HCT116 (cell line): ENCODE measurements at regions of chr6 and their contacts with region 1.

Region 1: DNA sequence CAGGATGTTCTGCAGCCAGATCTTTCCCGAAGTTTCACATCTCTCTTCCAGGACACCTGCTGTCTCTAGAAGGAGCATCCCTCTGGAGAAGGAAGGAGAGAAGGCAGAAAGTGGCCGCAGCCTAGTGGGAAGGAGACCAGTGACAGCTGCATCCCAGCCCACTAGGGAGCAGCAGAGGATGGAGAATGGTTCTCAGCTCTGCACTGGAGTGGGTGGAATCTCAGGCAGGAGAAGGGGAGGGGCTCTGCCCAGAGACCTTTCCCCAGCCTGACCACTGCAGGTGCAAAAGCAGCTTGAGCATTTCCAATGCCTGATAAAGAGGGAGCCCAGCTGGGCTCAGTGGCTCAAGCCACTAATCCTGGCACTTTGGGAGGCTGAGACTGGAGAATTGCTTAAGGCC is 32.3 kb downstream of the NCR2 start:
- DNase-seq: peak; percentile 60
- ATAC-seq: peak; percentile 92
- H3K4me3 ChIP-seq: no peak overlapping the region
- H3K27ac ChIP-seq: no peak overlapping the region
- H3K4me1 ChIP-seq: peaks cover 2 to 3% of the 10 kb centered on the region in 2 experiments; a peak in 1 of 4 replicates
- H3K27me3 ChIP-seq: peaks cover 4% of the 10 kb centered on the region; the same call in 1 of the 2 replicates
- CTCF ChIP-seq: peak; percentile 80 to 91 (median 86)
- POLR2A ChIP-seq: no peak
- RAD21 ChIP-seq: peak; percentile 93

Region 2: DNA sequence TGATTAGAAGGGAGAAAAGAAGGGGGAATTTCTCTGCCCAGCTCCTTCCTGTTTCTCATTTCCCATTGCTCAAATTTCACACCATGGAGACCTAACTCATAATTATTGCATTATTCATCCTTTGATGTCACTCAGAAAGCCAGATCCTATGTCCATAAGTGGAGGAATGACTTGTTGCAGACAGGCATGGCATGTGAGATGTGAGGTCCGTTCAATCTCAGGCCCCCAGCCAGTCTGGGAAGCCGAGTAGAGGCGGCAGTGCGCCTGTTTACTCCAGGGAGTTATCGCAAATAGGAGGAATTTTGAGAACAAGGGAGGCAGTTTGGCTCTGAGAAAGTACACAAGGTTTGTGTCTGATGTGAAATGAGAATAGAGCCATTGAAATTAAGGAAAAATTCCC is 1406.5 kb before region 1 on chr6:
- CTCF ChIA-PET with region 1: no interaction called
- POLR2A ChIA-PET with region 1: no interaction called
- RAD21 ChIA-PET with region 1: no interaction called
- intact Hi-C with region 1: no loop called
- DNase-seq: no peak
- ATAC-seq: no peak
- H3K4me3 ChIP-seq: no peak overlapping the region
- H3K27ac ChIP-seq: no peak overlapping the region
- H3K4me1 ChIP-seq: no peaks in the 10 kb centered on the region
- H3K27me3 ChIP-seq: peaks cover 41% of the 10 kb centered on the region
- CTCF ChIP-seq: no peak
- POLR2A ChIP-seq: no peak
- RAD21 ChIP-seq: no peak

Region 3: DNA sequence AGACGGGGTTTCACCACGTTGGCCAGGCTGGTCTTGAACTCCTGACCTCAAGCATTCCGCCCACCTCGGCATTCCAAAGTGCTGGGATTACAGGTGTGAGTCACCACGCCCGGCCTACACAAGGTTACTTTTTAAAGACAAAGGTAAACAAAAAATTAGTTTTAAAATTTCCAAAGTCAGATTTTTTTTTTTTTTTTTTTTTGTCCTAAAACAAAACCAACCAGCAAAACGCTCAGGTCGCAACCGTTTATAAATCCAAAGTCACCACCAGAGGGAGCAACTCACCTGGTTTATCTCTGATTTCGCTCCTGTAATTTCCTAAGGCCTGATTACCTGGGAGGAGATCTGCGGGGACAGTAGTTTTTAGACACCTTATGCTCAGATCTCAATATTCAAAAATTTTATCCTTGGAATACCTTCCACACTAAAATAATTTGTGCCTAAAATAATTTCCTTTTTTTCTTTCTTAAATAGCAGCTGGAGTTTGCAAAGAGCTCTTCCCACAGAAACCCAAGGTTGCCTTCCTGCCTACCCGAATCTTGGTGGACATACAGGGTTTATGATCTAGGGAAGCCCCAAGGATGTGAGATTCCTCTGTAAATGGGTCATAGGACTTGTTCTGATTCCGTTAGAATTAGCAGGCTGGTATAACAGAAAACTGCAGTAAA is 61.4 kb before region 1 on chr6:
- CTCF ChIA-PET with region 1: interaction called, 8 read pairs
- POLR2A ChIA-PET with region 1: no interaction called
- RAD21 ChIA-PET with region 1: no interaction called
- intact Hi-C with region 1: loop called (anchors 5 kb)
- DNase-seq: peak; percentile 58
- ATAC-seq: peak; percentile 84
- H3K4me3 ChIP-seq: peak overlapping the region; percentile 19 to 40; a peak in 3 of 4 replicates
- H3K27ac ChIP-seq: no peak overlapping the region
- H3K4me1 ChIP-seq: 0 out of 4 replicates have a peak, but pooled peaks cover 0 to 8% of the 10 kb centered on the region in 2 experiments
- H3K27me3 ChIP-seq: peaks cover 2% of the 10 kb centered on the region; the same call in 1 of the 2 replicates
- CTCF ChIP-seq: peak; percentile 59 to 73 (median 64); a peak in 5 of 6 replicates
- POLR2A ChIP-seq: no peak
- RAD21 ChIP-seq: peak; percentile 60

Region 4: DNA sequence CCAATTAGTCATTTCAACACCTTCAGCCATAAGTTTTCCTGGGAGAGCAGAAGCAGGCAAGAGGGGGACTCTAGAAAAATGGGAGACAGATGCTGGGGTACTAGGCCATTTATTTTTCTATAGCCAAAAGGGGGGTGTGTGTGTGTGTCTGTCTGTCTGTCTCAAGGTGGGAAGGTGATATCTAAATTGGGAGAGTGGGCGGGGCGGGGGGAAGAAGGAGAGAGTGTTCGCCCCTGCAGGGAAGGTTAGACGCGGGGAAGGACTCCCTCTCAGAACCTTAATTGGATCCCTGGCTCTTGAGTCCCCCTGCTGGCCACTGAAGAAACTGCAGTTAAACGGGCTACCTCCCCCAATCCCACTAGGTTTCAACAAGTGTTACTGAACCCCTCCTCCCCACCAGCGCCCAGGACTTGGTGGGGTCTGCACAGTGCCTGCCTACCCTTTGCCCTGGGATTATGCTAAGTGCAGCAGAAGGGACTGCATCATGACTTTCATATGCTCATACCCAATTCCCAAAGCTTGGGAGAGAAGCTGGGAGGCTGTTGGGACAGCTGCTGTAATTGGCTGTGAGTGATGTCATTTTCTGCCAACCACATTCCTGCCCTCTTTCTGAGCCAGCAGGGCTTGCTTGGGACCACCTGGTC is 224.3 kb after region 1 on chr6:
- CTCF ChIA-PET with region 1: interaction called, 6 read pairs
- POLR2A ChIA-PET with region 1: no interaction called
- RAD21 ChIA-PET with region 1: no interaction called
- intact Hi-C with region 1: loop called (anchors 1 kb)
- DNase-seq: peak; percentile 46
- ATAC-seq: peak; percentile 88
- H3K4me3 ChIP-seq: no peak overlapping the region
- H3K27ac ChIP-seq: no peak overlapping the region
- H3K4me1 ChIP-seq: peaks cover 0 to 3% of the 10 kb centered on the region in 2 experiments; a peak in 1 of 4 replicates
- H3K27me3 ChIP-seq: no peaks in the 10 kb centered on the region
- CTCF ChIP-seq: peak; percentile 89 to 92 (median 90)
- POLR2A ChIP-seq: no peak
- RAD21 ChIP-seq: peak; percentile 91

Region 5: GRCh38 chr6:41683510-41684310 is 316.0 kb after region 1 on chr6:
- CTCF ChIA-PET with region 1: interaction called, 22 read pairs
- POLR2A ChIA-PET with region 1: no interaction called
- RAD21 ChIA-PET with region 1: interaction called, 6 to 8 read pairs
- intact Hi-C with region 1: loop called (anchors 1 kb)
- DNase-seq: no peak
- ATAC-seq: peak; percentile 85
- H3K4me3 ChIP-seq: no peak overlapping the region
- H3K27ac ChIP-seq: no peak overlapping the region
- H3K4me1 ChIP-seq: peaks cover 4 to 13% of the 10 kb centered on the region in 2 experiments; a peak in 3 of 4 replicates
- H3K27me3 ChIP-seq: no peaks in the 10 kb centered on the region
- CTCF ChIP-seq: peak; percentile 87 to 94 (median 89)
- POLR2A ChIP-seq: no peak
- RAD21 ChIP-seq: peak; percentile 93

Region 6: DNA sequence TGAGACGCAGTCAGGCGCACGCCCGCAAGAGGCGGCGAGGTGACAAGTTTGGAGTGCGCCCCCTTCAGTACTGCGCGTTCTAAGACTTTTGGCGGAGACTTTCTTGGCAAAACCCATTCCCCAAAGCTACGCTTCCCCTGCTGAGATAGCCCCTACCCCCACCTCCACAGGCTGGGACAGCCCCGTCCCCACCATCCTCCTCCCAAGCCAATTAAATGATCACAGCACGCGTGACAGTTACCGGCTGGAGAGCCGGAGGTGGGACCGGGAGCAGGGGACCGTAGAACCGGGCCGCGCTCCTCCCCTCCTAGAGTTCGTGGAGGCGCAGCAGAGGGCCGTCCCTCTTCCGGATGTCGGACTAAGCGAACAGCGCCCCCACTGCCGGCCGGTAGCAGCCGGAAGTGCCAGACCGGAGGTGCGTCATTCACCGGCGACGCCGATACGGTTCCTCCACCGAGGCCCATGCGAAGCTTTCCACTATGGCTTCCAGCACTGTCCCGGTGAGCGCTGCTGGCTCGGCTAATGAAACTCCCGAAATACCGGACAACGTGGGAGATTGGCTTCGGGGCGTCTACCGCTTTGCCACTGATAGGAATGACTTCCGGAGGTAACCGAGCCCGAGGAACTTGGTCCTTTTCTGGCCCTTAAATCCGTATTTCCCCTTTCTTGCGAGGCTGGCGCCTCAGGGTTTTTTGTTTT is 419.7 kb after region 1 on chr6 and contains the start of gene TOMM6:
- CTCF ChIA-PET with region 1: interaction called, 10 read pairs
- POLR2A ChIA-PET with region 1: no interaction called
- RAD21 ChIA-PET with region 1: no interaction called
- intact Hi-C with region 1: no loop called
- DNase-seq: peak; percentile 88
- ATAC-seq: peak; percentile 82
- H3K4me3 ChIP-seq: peak within 1 kb of the TSS; percentile 67 to 98
- H3K27ac ChIP-seq: peak within 1 kb of the TSS; percentile 84
- H3K4me1 ChIP-seq: peaks cover 5 to 16% of the 10 kb centered on the region in 2 experiments; a peak in 2 of 4 replicates
- H3K27me3 ChIP-seq: no peaks in the 10 kb centered on the region
- CTCF ChIP-seq: peak in 2 of 3 experiments; percentile 67 to 80; a peak in 4 of 6 replicates
- POLR2A ChIP-seq: peak; percentile 92
- RAD21 ChIP-seq: no peak
- total RNA-seq, gene TOMM6: 292 TPM